T-cell (primary cell): ENCODE measurements at regions of chr11 and their contacts with region 1.

Region 1: GRCh38 chr11:117010808-117011540 is 87.3 kb downstream of the SIK3 start:
- DNase-seq: no peak
- ATAC-seq: peak in 1 of 4 experiments; percentile 29
- H3K4me3 ChIP-seq: no peak overlapping the region
- H3K4me3 Mint-ChIP-seq: no peak overlapping the region
- H3K27ac ChIP-seq: no peak overlapping the region
- H3K27ac Mint-ChIP-seq: no peak overlapping the region
- H3K4me1 ChIP-seq: peaks cover 0 to 8% of the 10 kb centered on the region in 2 experiments
- H3K4me1 Mint-ChIP-seq: peaks cover 25 to 53% (median 44%) of the 10 kb centered on the region in 3 donors
- H3K27me3 ChIP-seq: no peaks in the 10 kb centered on the region
- H3K27me3 Mint-ChIP-seq: no peaks in the 10 kb centered on the region

Region 2: GRCh38 chr11:116742104-116742503 is 268.9 kb before region 1 on chr11:
- CTCF ChIA-PET with region 1: no interaction called
- POLR2A ChIA-PET with region 1: no interaction called
- DNase-seq: no peak
- ATAC-seq: no peak
- H3K4me3 ChIP-seq: no peak overlapping the region
- H3K4me3 Mint-ChIP-seq: no peak overlapping the region
- H3K27ac ChIP-seq: no peak overlapping the region
- H3K27ac Mint-ChIP-seq: no peak overlapping the region
- H3K4me1 ChIP-seq: no peaks in the 10 kb centered on the region
- H3K4me1 Mint-ChIP-seq: no peaks in the 10 kb centered on the region
- H3K27me3 ChIP-seq: no peaks in the 10 kb centered on the region
- H3K27me3 Mint-ChIP-seq: no peaks in the 10 kb centered on the region

Region 3: DNA sequence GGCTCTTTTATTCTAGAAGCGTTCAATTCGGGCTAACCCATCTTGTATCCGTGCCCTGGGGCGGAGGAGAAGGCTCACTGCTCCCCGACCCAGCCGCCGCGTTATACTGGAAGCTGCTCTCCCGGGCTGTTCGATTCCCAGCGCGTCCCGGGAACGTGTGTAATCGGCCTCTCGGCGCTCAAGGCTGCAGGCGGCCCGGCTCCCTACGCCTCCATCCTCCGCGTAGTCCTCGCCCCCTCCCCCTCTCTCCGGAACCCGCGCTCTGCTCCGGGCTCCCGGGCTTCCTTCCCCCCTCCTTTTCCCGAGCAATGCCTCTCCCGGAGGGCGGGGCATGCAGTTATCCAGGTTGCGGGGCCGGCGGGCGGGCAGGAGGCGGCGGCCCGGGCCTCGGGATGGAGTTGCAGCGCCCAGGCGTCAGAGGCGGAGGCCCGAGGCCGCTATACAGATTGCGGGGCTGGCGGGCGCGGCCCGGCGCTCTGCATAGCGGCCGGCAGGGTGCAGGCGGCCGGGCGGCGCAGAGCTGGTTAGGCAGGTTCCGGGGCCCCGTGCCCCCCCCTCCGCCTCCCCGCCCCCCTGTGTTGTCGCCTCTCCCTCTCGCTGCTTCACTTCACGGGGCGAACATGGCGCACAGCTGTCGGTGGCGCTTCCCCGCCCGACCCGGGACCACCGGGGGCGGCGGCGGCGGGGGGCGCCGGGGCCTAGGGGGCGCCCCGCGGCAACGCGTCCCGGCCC is 1425.1 kb after region 1 on chr11 and contains the start of gene KMT2A:
- CTCF ChIA-PET with region 1: no interaction called
- POLR2A ChIA-PET with region 1: interaction called in 1 of 2 experiments, 15 read pairs
- DNase-seq: peak; percentile 78 to 97 (median 89)
- ATAC-seq: peak; percentile 59 to 79 (median 62)
- H3K4me3 ChIP-seq: peak within 1 kb of the TSS; percentile 87 to 96
- H3K4me3 Mint-ChIP-seq: peak within 1 kb of the TSS; percentile 91 to 95 (median 92)
- H3K27ac ChIP-seq: peak within 1 kb of the TSS; percentile 92
- H3K27ac Mint-ChIP-seq: peak within 1 kb of the TSS; percentile 94 to 96
- H3K4me1 ChIP-seq: peaks cover 29 to 35% of the 10 kb centered on the region in 2 experiments
- H3K4me1 Mint-ChIP-seq: peaks cover 35 to 46% (median 36%) of the 10 kb centered on the region in 3 donors
- H3K27me3 ChIP-seq: no peaks in the 10 kb centered on the region
- H3K27me3 Mint-ChIP-seq: no peaks in the 10 kb centered on the region
- total RNA-seq, gene KMT2A: 130 to 183 (median 153) TPM